K562 (cell line): ENCODE measurements at regions of chr11 and their contacts with region 1.

Region 1: DNA sequence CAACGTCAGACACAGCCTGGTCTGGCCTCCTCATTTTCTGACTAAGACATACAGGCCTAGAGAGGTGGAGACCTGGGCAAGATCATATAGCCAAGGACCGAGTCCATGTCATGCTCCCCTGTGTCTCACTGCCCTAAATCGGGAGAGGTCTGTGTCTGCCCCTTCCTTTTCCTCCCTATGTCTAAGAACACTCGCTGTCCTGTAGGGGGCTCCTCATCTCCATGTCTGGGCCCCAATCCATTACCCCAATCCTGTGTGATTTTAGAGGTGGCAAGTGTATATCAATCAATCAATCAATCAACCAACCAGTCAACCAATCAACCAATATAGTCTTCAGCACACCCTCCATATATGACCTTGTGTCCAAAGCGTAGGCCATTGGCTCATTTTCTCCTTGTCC is 125.7 kb downstream of the KIRREL3 start:
- DNase-seq: peak; percentile 13 to 29 (median 18)
- ATAC-seq: peak; percentile 76
- H3K4me3 ChIP-seq: no peak overlapping the region
- H3K27ac ChIP-seq: no peak overlapping the region
- H3K4me1 ChIP-seq: no peaks in the 10 kb centered on the region
- H3K27me3 ChIP-seq: no peaks in the 10 kb centered on the region
- CTCF ChIP-seq: peak in 2 of 3 experiments; percentile 39 to 43; a peak in 2 of 6 replicates
- EP300 ChIP-seq: no peak
- POLR2A ChIP-seq: no peak
- RAD21 ChIP-seq: peak in 1 of 2 experiments; percentile 30; a peak in 1 of 4 replicates

Region 2: DNA sequence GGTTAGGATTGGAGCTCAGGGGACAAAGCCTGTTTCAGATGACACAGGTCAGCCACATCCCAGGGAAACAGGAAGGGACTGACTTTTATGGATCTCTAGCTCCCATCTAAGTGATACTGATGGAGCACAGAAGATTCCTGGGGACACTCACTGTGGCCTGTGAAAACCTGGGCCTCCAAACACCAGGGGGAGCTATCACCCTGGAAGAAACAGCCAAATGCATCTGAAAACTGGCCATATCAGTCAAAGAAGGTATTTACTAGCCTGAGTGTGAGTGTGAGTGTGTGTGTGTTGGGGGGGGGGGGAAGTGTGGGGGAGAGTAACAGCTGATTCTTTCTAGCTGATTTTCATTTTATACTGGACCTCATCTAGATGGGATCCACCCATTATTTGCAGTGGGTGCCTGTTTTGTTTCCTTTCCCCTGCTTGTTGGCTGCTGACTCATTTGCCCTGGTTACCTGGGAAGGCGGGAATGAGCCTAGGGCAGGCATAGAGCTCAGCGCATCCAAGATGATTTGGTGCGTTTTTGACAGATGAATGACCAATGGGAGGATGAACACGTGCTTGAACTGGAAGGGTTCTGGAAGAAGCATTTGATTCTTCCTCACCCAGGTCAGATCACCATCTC is 158.3 kb before region 1 on chr11:
- CTCF ChIA-PET with region 1: no interaction called
- POLR2A ChIA-PET with region 1: no interaction called
- in situ Hi-C with region 1: no loop called
- intact Hi-C with region 1: no loop called
- DNase-seq: peak; percentile 46 to 56 (median 50)
- ATAC-seq: peak; percentile 82
- H3K4me3 ChIP-seq: no peak overlapping the region
- H3K27ac ChIP-seq: no peak overlapping the region
- H3K4me1 ChIP-seq: peaks cover 0 to 7% of the 10 kb centered on the region in 2 experiments; a peak in 2 of 5 replicates
- H3K27me3 ChIP-seq: peaks cover 0 to 25% of the 10 kb centered on the region in 2 experiments; a peak in 2 of 5 replicates
- CTCF ChIP-seq: peak; percentile 61 to 74 (median 62)
- EP300 ChIP-seq: no peak
- POLR2A ChIP-seq: no peak
- RAD21 ChIP-seq: peak; percentile 31 to 65; a peak in 3 of 4 replicates

Region 3: GRCh38 chr11:127939000-127939399 is 1064.2 kb after region 1 on chr11:
- CTCF ChIA-PET with region 1: no interaction called
- POLR2A ChIA-PET with region 1: no interaction called
- in situ Hi-C with region 1: no loop called
- intact Hi-C with region 1: loop called (anchors 5 kb)
- DNase-seq: no peak
- ATAC-seq: no peak
- H3K4me3 ChIP-seq: no peak overlapping the region
- H3K27ac ChIP-seq: no peak overlapping the region
- H3K4me1 ChIP-seq: no peaks in the 10 kb centered on the region
- H3K27me3 ChIP-seq: no peaks in the 10 kb centered on the region
- CTCF ChIP-seq: no peak
- EP300 ChIP-seq: no peak
- POLR2A ChIP-seq: no peak
- RAD21 ChIP-seq: no peak